CD8-positive, alpha-beta T cell (primary cell): ENCODE measurements at regions of chr7 and their contacts with region 1.

Region 1: DNA sequence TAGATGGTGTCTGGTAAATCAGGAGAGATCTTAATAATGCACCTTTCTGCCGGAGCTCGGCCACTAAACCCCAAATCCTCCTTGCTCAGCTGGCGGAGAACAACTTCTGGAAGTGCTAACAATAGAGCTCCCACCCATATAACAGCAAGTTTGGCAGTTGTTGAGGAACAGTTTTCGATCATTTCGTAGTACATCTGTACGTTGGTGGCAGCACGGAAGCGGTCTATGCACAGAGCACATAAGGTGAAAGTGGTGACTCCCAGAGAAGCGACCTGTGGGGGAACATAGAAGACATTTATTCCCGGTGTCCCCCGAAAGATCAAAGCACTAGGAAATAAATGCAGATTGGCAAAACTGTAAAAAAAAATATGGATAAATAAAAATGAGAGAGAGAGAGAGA is 18.5 kb downstream of the GPR37 start:
- DNase-seq: no peak
- ATAC-seq: no peak
- H3K4me3 ChIP-seq: no peak overlapping the region
- H3K4me3 Mint-ChIP-seq: no peak overlapping the region
- H3K27ac ChIP-seq: no peak overlapping the region
- H3K27ac Mint-ChIP-seq: no peak overlapping the region
- H3K4me1 ChIP-seq: no peaks in the 10 kb centered on the region
- H3K4me1 Mint-ChIP-seq: no peaks in the 10 kb centered on the region
- H3K27me3 ChIP-seq: no peaks in the 10 kb centered on the region
- H3K27me3 Mint-ChIP-seq: peaks cover 2% of the 10 kb centered on the region
- CTCF ChIP-seq: no peak

Region 2: GRCh38 chr7:124965553-124965952 is 218.5 kb after region 1 on chr7:
- CTCF ChIA-PET with region 1: no interaction called
- POLR2A ChIA-PET with region 1: no interaction called
- intact Hi-C with region 1: loop called in 1 of 2 experiments (anchors 5 kb)
- DNase-seq: no peak
- ATAC-seq: no peak
- H3K4me3 ChIP-seq: no peak overlapping the region
- H3K4me3 Mint-ChIP-seq: no peak overlapping the region
- H3K27ac ChIP-seq: no peak overlapping the region
- H3K27ac Mint-ChIP-seq: no peak overlapping the region
- H3K4me1 ChIP-seq: no peaks in the 10 kb centered on the region
- H3K4me1 Mint-ChIP-seq: no peaks in the 10 kb centered on the region
- H3K27me3 ChIP-seq: no peaks in the 10 kb centered on the region
- H3K27me3 Mint-ChIP-seq: no peaks in the 10 kb centered on the region
- CTCF ChIP-seq: no peak